Mammary epithelial cell (primary cell): ENCODE measurements at regions of chr4 and their contacts with region 1.

Region 1: DNA sequence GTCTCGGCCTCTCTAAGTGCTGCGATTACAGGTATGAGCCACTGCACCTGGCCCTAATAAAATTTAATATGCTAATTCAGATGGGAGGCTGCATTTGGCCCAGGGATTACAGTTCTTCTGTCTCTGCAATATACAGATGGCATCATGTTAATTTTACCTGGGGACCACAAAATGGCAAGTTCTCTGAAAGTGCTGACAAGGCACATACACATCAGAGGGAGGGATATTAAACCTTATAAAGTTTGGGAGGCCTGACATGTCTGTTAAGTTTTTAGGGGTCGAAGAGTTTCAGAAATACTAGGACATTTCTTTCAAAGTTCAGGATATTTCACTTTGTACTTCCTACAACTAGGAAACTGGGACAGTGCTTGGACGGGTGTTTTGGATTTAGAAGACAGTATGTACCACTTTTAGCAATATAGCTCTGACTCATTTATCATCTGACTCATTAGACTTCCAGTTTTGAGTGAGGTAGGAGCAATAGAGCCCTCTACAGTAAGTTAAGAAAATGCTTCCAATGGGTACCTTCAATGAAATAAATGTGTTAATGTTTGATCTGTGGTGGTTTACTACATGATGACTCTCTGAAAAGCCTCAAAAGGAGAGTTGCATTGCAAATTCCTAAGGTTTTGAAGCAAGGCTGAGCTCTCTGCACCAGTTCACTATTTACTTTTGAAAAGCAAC is 981.0 kb upstream of the HS3ST1 start:
- DNase-seq: peak; percentile 46
- H3K4me3 ChIP-seq: no peak overlapping the region
- H3K27ac ChIP-seq: no peak overlapping the region
- H3K4me1 ChIP-seq: no peaks in the 10 kb centered on the region
- H3K27me3 ChIP-seq: no peaks in the 10 kb centered on the region
- CTCF ChIP-seq: peak; percentile 18 to 50

Region 2: DNA sequence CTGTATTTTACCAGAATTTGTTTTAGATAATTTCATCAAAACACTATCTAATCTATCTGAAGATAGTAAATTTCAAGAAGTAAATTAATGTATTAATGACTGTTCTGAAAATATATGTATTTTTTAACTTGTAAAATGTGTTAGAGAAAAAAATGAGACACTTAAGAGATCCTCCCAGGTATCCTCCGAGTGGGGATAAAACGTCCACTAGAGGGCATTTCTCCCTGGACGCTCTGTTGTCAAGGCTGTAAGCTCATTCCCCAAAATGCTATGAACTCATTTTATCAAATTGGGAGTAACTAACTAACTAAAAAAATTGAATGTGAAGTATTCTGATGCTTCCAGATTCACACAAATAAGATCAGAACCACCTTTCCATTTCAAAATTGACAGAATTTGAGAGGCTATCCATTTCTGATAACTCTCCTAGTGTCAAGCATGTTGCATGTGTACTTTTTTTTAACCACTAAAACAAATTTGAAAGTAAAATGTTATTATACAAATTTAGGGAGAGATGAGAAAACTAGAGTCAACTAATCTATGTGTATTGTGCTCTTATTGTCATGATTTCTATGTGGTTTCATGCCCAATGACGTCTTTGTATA is 643.7 kb before region 1 on chr4:
- CTCF ChIA-PET with region 1: interaction called, 3 read pairs
- dilution Hi-C with region 1: no loop called
- in situ Hi-C with region 1: no loop called
- intact Hi-C with region 1: loop called (anchors 5 kb)
- DNase-seq: peak; percentile 41
- H3K4me3 ChIP-seq: no peak overlapping the region
- H3K27ac ChIP-seq: no peak overlapping the region
- H3K4me1 ChIP-seq: no peaks in the 10 kb centered on the region
- H3K27me3 ChIP-seq: no peaks in the 10 kb centered on the region
- CTCF ChIP-seq: peak; percentile 79 to 80

Region 3: GRCh38 chr4:11805842-11806241 is 603.8 kb before region 1 on chr4:
- CTCF ChIA-PET with region 1: no interaction called
- dilution Hi-C with region 1: no loop called
- in situ Hi-C with region 1: no loop called
- intact Hi-C with region 1: loop called (anchors 2 kb)
- DNase-seq: peak; percentile 28
- H3K4me3 ChIP-seq: no peak overlapping the region
- H3K27ac ChIP-seq: no peak overlapping the region
- H3K4me1 ChIP-seq: no peaks in the 10 kb centered on the region
- H3K27me3 ChIP-seq: no peaks in the 10 kb centered on the region
- CTCF ChIP-seq: peak; percentile 55 to 74

Region 4: GRCh38 chr4:11954093-11954492 is 455.6 kb before region 1 on chr4:
- CTCF ChIA-PET with region 1: no interaction called
- dilution Hi-C with region 1: no loop called
- in situ Hi-C with region 1: no loop called
- intact Hi-C with region 1: loop called (anchors 5 kb)
- DNase-seq: peak; percentile 8
- H3K4me3 ChIP-seq: no peak overlapping the region
- H3K27ac ChIP-seq: no peak overlapping the region
- H3K4me1 ChIP-seq: no peaks in the 10 kb centered on the region
- H3K27me3 ChIP-seq: no peaks in the 10 kb centered on the region
- CTCF ChIP-seq: peak; percentile 37 to 60

Region 5: GRCh38 chr4:12041828-12042227 is 367.8 kb before region 1 on chr4:
- CTCF ChIA-PET with region 1: no interaction called
- dilution Hi-C with region 1: no loop called
- in situ Hi-C with region 1: no loop called
- intact Hi-C with region 1: loop called (anchors 2 kb)
- DNase-seq: peak; percentile 1
- H3K4me3 ChIP-seq: no peak overlapping the region
- H3K27ac ChIP-seq: no peak overlapping the region
- H3K4me1 ChIP-seq: no peaks in the 10 kb centered on the region
- H3K27me3 ChIP-seq: no peaks in the 10 kb centered on the region
- CTCF ChIP-seq: peak in 1 of 2 donors; percentile 28